A549 (cell line): ENCODE measurements at regions of chr6 and their contacts with region 1.

Region 1: GRCh38 chr6:34196126-34196830 is 40.4 kb upstream of the HMGA1 start:
- DNase-seq: peak; percentile 57 to 69
- ATAC-seq: peak; percentile 97 to 98
- H3K4me3 ChIP-seq: peak overlapping the region; percentile 25; the same call in 2 of the 3 replicates
- H3K27ac ChIP-seq: peak overlapping the region; percentile 68 to 82
- H3K4me1 ChIP-seq: no peaks in the 10 kb centered on the region
- CTCF ChIP-seq: peak; percentile 85
- EP300 ChIP-seq: no peak
- POLR2A ChIP-seq: no peak
- RAD21 ChIP-seq: peak; percentile 84 to 93

Region 2: GRCh38 chr6:34161857-34162515 is 34.3 kb before region 1 on chr6:
- CTCF ChIA-PET with region 1: interaction called, 10 read pairs
- POLR2A ChIA-PET with region 1: no interaction called
- DNase-seq: no peak
- ATAC-seq: no peak
- H3K4me3 ChIP-seq: no peak overlapping the region
- H3K27ac ChIP-seq: no peak overlapping the region
- H3K4me1 ChIP-seq: no peaks in the 10 kb centered on the region
- CTCF ChIP-seq: no peak
- EP300 ChIP-seq: no peak
- POLR2A ChIP-seq: no peak
- RAD21 ChIP-seq: no peak

Region 3: GRCh38 chr6:34182751-34183531 is 13.3 kb before region 1 on chr6:
- CTCF ChIA-PET with region 1: interaction called, 37 read pairs
- POLR2A ChIA-PET with region 1: no interaction called
- DNase-seq: no peak
- ATAC-seq: no peak
- H3K4me3 ChIP-seq: no peak overlapping the region
- H3K27ac ChIP-seq: no peak overlapping the region
- H3K4me1 ChIP-seq: no peaks in the 10 kb centered on the region
- CTCF ChIP-seq: no peak
- EP300 ChIP-seq: no peak
- POLR2A ChIP-seq: no peak
- RAD21 ChIP-seq: no peak

Region 4: DNA sequence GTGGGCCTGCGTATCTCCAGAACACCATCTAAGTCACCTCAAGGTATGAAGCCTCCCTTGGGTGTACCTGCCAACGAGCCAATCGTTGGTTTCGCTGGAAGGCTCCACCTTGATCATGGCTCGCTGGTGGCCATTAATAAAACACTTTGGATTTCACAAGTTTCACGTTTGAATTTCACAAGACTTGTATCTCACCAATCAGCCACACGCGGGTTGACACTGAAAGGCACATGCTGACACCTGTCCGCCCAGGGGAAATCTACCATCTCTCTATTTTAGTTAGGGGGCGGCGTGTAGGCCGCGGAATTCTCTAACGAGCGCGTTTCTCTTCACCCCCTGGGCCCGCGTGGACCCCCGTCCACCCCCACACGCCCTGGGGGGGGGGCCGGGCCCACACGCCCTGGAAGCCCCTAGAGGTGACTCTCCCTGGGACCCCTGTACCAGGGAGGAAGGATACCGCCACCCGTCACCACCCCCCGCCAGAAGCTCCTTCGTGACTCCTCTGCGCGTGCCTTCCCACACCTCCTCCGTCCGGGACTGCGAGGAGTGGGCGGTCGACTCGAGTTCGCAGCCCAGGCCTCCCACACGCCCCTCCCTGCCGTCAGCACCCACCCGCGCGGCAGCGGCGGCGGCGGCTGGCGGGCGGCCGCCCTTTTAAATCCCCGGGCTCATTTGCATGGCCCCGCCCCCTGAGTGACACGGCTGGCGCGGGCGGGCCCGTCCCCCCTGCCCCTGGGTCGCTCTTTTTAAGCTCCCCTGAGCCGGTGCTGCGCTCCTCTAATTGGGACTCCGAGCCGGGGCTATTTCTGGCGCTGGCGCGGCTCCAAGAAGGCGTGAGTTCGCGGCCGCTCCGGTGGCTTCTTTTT is 40.1 kb after region 1 on chr6 and contains the start of gene HMGA1:
- CTCF ChIA-PET with region 1: interaction called, 19 read pairs
- POLR2A ChIA-PET with region 1: interaction called, 14 read pairs
- DNase-seq: peak; percentile 64 to 90
- ATAC-seq: peak; percentile 66 to 82; a peak in 5 of 6 replicates
- H3K4me3 ChIP-seq: peak within 1 kb of the TSS; percentile 83
- H3K27ac ChIP-seq: peak within 1 kb of the TSS; percentile 98 to 99
- H3K4me1 ChIP-seq: peaks cover 45% of the 10 kb centered on the region
- CTCF ChIP-seq: no peak
- EP300 ChIP-seq: no peak
- POLR2A ChIP-seq: peak; percentile 96
- RAD21 ChIP-seq: no peak
- polyA plus RNA-seq, gene HMGA1: 119 and 127 TPM in 2 replicates

Region 5: GRCh38 chr6:34414999-34415858 is 219.0 kb after region 1 on chr6:
- CTCF ChIA-PET with region 1: interaction called, 36 read pairs
- POLR2A ChIA-PET with region 1: interaction called, 8 read pairs
- DNase-seq: peak in 1 of 2 experiments; percentile 76
- ATAC-seq: peak; percentile 81 to 87
- H3K4me3 ChIP-seq: no peak overlapping the region
- H3K27ac ChIP-seq: peak overlapping the region in 1 of 2 experiments; percentile 35; a peak in 1 of 6 replicates
- H3K4me1 ChIP-seq: peaks cover 28% of the 10 kb centered on the region; the same call in 2 of the 3 replicates
- CTCF ChIP-seq: peak; percentile 58
- EP300 ChIP-seq: no peak
- POLR2A ChIP-seq: no peak
- RAD21 ChIP-seq: peak; percentile 60 to 64